Activated CD8-positive, alpha-beta memory T cell treated with anti-CD3 and anti-CD28 coated beads, Interleukin-2, amount 10 ng/mL, durations not matched to agents 7 days and 5 days (primary cell): ENCODE measurements at regions of chr20 and their contacts with region 1.

Region 1: GRCh38 chr20:31661625-31662371 is 24.1 kb downstream of the COX4I2 start:
- DNase-seq: peak; percentile 82
- ATAC-seq: peak; percentile 86
- H3K4me3 Mint-ChIP-seq: peak overlapping the region; percentile 50
- H3K27ac Mint-ChIP-seq: peak overlapping the region; percentile 84
- H3K4me1 Mint-ChIP-seq: peaks cover 43% of the 10 kb centered on the region
- H3K27me3 Mint-ChIP-seq: no peaks in the 10 kb centered on the region

Region 2: DNA sequence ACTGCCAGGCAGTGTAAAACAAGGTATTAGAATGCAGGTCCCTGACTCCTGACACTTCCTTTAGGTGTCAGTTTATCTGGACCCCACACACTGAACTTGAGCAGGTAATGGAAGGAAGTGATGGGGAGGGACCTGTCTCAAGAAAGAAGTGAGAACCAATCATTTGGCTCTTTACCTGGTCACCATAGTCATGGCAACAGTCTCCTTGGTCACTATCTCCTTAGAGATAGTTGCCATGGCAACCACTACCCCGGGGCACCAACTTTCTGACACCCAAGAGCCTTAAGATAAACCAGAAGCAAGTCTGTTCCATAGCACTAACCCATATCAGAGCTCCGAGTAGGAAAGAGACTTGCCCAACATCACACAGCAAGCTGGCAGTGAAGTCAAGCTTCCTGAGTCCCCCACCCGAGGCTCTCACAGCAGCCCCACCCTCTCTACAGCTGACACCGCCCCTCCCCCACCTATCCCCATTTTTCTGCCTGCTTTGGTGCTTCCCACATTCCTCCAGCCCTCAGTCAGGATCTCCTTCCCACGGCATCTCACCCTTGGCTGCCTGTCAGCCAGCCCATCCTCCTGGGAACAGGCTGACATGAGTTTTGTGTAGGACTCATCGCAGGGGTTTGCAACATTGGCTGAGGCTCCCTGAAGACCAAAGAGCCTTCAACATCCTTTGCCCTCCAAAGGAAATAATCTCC is 163.8 kb before region 1 on chr20:
- CTCF ChIA-PET with region 1: no interaction called
- DNase-seq: no peak
- ATAC-seq: no peak
- H3K4me3 Mint-ChIP-seq: no peak overlapping the region
- H3K27ac Mint-ChIP-seq: no peak overlapping the region
- H3K4me1 Mint-ChIP-seq: peaks cover 2% of the 10 kb centered on the region
- H3K27me3 Mint-ChIP-seq: peaks cover 25% of the 10 kb centered on the region

Region 3: DNA sequence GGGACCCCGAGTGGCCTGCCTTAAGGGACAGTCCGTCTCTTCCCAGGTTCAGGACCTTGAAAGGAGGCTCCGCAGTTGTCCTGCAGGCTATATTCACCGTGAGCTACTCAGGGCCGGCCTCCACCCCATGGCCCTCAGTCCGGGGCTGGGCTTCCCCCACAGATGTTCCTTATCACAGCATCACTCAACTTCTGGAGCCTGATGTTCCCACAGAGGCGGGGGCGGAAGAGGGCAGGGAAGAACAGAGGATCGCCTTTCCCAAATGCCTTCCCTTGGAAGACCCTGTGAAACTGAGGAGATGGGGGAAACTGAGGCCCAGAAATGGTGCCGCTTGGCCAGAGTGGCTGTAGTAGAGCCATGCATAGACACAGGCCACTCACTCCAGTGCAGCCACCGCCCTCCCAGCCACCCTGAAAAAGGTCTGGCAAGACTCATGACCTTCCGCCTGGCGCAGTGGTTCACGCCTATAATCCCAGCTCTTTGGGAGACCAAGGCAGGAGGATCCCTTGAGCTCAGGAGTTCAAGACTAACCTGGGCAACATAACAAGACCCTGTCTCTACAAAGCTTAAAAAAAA is 28.4 kb before region 1 on chr20:
- CTCF ChIA-PET with region 1: interaction called, 29 read pairs
- DNase-seq: no peak
- ATAC-seq: no peak
- H3K4me3 Mint-ChIP-seq: no peak overlapping the region
- H3K27ac Mint-ChIP-seq: no peak overlapping the region
- H3K4me1 Mint-ChIP-seq: peaks cover 6% of the 10 kb centered on the region
- H3K27me3 Mint-ChIP-seq: peaks cover 17% of the 10 kb centered on the region

Region 4: GRCh38 chr20:31674895-31675827 is 13.4 kb after region 1 on chr20:
- CTCF ChIA-PET with region 1: interaction called, 94 read pairs
- DNase-seq: peak; percentile 90
- ATAC-seq: peak; percentile 70
- H3K4me3 Mint-ChIP-seq: peak overlapping the region; percentile 85
- H3K27ac Mint-ChIP-seq: peak overlapping the region; percentile 97
- H3K4me1 Mint-ChIP-seq: peaks cover 91% of the 10 kb centered on the region
- H3K27me3 Mint-ChIP-seq: no peaks in the 10 kb centered on the region

Region 5: GRCh38 chr20:31698803-31699718 is 37.3 kb after region 1 on chr20:
- CTCF ChIA-PET with region 1: interaction called, 685 read pairs
- DNase-seq: peak; percentile 67
- ATAC-seq: peak; percentile 93
- H3K4me3 Mint-ChIP-seq: peak overlapping the region; percentile 47
- H3K27ac Mint-ChIP-seq: peak overlapping the region; percentile 92
- H3K4me1 Mint-ChIP-seq: peaks cover 66% of the 10 kb centered on the region
- H3K27me3 Mint-ChIP-seq: no peaks in the 10 kb centered on the region

Region 6: DNA sequence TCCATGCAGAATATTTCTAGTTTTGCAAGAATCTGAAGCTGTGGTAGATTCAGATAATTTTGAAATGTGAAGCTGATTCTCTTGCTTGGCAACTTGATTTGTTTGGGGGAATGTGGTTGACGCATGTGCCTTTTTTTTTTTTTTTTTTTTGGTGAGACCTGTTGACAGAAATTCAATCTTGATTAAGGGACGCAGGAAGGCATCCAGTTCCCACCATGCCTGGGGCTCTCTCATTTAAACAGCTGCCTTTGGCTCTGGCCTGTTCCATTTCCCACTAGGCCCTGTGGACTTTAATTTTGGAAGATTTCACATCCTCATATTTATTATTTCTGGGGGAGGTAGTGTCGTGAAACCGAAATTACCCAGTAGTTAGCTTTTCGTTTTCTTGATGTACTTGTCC is 85.8 kb after region 1 on chr20:
- CTCF ChIA-PET with region 1: interaction called, 22 read pairs
- DNase-seq: no peak
- ATAC-seq: no peak
- H3K4me3 Mint-ChIP-seq: no peak overlapping the region
- H3K27ac Mint-ChIP-seq: no peak overlapping the region
- H3K4me1 Mint-ChIP-seq: peaks cover 32% of the 10 kb centered on the region
- H3K27me3 Mint-ChIP-seq: no peaks in the 10 kb centered on the region